Activated T-helper 1 cell treated with anti-CD3 and anti-CD28 coated beads, Interleukin-12 subunit alpha, Interleukin-12 subunit beta, Interleukin-2, Interleukin-4 antibody, amounts not matched to agents 30 ng/mL and 10 ng/mL and 1 ng/mL, durations not matched to agents 14 hours and 24 hours and 36 hours (primary cell): ENCODE measurements at regions of chr6 and their contacts with region 1.

Region 1: GRCh38 chr6:674956-675355 is 18.0 kb downstream of the EXOC2 start:
- DNase-seq: no peak
- H3K4me3 Mint-ChIP-seq: no peak overlapping the region
- H3K27ac Mint-ChIP-seq: no peak overlapping the region
- H3K4me1 Mint-ChIP-seq: peaks cover 19% of the 10 kb centered on the region
- H3K27me3 Mint-ChIP-seq: no peaks in the 10 kb centered on the region

Region 2: DNA sequence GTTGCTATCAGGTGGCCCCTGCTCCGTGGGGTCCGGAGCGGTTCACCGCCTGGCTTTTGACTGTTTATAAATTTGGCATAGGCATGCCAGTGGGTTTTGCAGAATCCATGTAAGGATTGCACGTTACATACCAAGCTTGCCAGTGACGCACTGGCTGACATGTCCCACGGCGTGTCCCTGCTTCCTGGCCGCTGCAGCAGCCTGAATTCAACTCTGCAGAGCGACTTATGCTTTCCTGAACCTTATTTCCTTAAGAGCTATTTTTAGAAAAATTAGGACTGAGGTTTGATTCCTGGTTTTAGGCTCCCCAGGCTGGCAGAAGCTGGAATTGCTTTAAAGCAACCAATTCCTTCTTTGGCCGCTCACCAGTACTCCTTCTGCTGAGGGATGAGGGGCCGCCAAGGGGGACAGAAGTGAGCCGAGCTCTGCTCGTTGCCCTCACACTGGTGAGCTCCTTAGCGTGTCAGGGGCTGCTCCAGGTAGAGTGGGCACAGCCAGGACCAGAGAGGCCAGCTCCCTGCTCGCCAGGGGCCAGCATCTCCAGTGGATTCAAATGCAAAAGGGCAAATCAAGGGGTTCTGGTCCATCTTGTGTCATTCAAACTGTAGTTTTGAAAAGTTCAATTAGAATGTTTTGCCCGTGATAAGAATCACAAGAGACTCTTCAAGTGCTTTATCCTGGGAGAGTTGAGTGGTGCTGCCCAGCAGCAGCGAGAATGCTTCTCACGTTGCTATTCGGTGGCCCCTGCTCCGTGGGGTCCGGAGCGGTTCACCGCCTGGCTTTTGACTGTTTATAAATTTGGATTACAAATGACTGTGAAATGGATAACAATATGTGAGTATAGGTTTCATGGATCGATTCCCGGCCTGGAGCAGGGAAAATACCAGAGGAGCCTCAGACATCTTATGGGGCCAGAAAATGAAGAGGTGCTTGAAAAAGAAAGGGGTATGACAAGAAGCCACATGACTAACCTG is 300.9 kb before region 1 on chr6:
- intact Hi-C with region 1: no loop called
- DNase-seq: no peak
- H3K4me3 Mint-ChIP-seq: no peak overlapping the region
- H3K27ac Mint-ChIP-seq: no peak overlapping the region
- H3K4me1 Mint-ChIP-seq: no peaks in the 10 kb centered on the region
- H3K27me3 Mint-ChIP-seq: peaks cover 14% of the 10 kb centered on the region

Region 3: GRCh38 chr6:636488-636887 is 38.5 kb before region 1 on chr6:
- intact Hi-C with region 1: loop called (anchors 1 kb)
- DNase-seq: no peak
- H3K4me3 Mint-ChIP-seq: no peak overlapping the region
- H3K27ac Mint-ChIP-seq: no peak overlapping the region
- H3K4me1 Mint-ChIP-seq: peaks cover 14% of the 10 kb centered on the region
- H3K27me3 Mint-ChIP-seq: no peaks in the 10 kb centered on the region

Region 4: GRCh38 chr6:659716-660581 is 15.0 kb before region 1 on chr6:
- intact Hi-C with region 1: loop called (anchors 2 kb)
- DNase-seq: no peak
- H3K4me3 Mint-ChIP-seq: peak overlapping the region; percentile 13
- H3K27ac Mint-ChIP-seq: peak overlapping the region; percentile 14
- H3K4me1 Mint-ChIP-seq: peaks cover 62% of the 10 kb centered on the region
- H3K27me3 Mint-ChIP-seq: no peaks in the 10 kb centered on the region